HepG2 (cell line): ENCODE measurements at regions of chr6 and their contacts with region 1.

Region 1: GRCh38 chr6:49698478-49698877 is 14.9 kb downstream of the CRISP2 start:
- DNase-seq: no peak
- ATAC-seq: no peak
- H3K4me3 ChIP-seq: no peak overlapping the region
- H3K27ac ChIP-seq: no peak overlapping the region
- H3K4me1 ChIP-seq: no peaks in the 10 kb centered on the region
- H3K27me3 ChIP-seq: no peaks in the 10 kb centered on the region
- CTCF ChIP-seq: no peak
- EP300 ChIP-seq: no peak
- POLR2A ChIP-seq: no peak
- RAD21 ChIP-seq: no peak

Region 2: DNA sequence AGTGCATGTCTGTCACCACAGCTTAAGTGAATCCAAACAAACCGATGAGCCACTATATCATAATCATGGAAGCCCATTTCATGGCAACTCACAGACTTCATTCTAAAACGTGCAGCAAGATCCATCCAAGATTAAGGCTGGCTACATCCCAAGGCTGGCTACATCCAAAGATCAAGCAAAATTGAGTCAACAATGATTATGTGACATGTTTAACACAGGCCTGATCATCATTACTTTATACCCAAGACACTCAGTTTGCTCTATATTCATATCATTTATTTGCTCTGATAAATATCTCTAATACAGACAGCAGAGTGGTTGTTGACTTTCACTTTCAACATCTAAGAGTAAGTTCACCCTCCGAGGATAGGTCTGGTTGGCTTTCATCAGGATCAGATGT is 353.4 kb before region 1 on chr6:
- CTCF ChIA-PET with region 1: no interaction called
- POLR2A ChIA-PET with region 1: no interaction called
- in situ Hi-C with region 1: no loop called
- intact Hi-C with region 1: no loop called
- DNase-seq: no peak
- ATAC-seq: no peak
- H3K4me3 ChIP-seq: no peak overlapping the region
- H3K27ac ChIP-seq: no peak overlapping the region
- H3K4me1 ChIP-seq: no peaks in the 10 kb centered on the region
- H3K27me3 ChIP-seq: no peaks in the 10 kb centered on the region
- CTCF ChIP-seq: no peak
- EP300 ChIP-seq: no peak
- POLR2A ChIP-seq: no peak
- RAD21 ChIP-seq: no peak

Region 3: DNA sequence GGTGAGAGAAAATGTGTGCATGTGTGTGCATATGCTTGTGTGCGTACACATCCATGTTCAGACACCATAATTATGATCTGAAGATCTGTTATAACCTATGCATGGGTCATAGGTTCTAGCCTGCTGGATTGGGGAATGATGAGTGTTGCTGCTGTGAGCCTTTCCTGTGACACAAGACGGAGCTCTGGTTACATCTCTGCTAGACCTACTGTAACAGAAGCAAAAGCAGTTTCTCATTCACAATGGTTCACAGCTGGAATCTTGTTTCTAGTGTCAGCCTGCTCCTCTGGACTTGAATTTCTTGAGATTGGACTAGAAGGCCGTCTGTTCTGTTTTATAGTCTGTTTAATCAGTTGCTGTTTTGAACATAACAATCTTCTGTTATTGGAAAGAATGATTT is 225.3 kb after region 1 on chr6:
- CTCF ChIA-PET with region 1: no interaction called
- POLR2A ChIA-PET with region 1: no interaction called
- in situ Hi-C with region 1: no loop called
- intact Hi-C with region 1: no loop called
- DNase-seq: no peak
- ATAC-seq: peak; percentile 40; the same call in 1 of the 3 replicates
- H3K4me3 ChIP-seq: no peak overlapping the region
- H3K27ac ChIP-seq: no peak overlapping the region
- H3K4me1 ChIP-seq: no peaks in the 10 kb centered on the region
- H3K27me3 ChIP-seq: no peaks in the 10 kb centered on the region
- CTCF ChIP-seq: peak; percentile 35; the same call in 1 of the 2 replicates
- EP300 ChIP-seq: no peak
- POLR2A ChIP-seq: no peak
- RAD21 ChIP-seq: no peak

Region 4: DNA sequence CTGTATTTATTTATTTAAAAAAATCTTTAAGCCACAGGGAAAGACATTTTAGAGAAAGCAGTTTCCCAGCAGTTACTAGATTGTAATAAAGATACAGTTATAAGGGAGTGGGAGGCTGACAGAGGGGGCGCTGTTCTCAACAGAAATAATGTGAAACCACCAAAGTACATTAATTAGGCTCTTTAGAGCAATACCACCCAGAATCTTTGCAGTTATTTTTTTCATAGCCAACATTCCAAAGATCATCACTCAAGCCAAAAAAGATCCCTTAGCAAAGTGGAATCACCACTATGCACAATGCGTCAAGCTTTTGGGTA is 682.6 kb after region 1 on chr6:
- CTCF ChIA-PET with region 1: no interaction called
- POLR2A ChIA-PET with region 1: no interaction called
- in situ Hi-C with region 1: no loop called
- intact Hi-C with region 1: loop called (anchors 10 kb)
- DNase-seq: no peak
- ATAC-seq: peak; percentile 77
- H3K4me3 ChIP-seq: peak overlapping the region in 2 of 3 experiments; percentile 26 to 49; a peak in 2 of 6 replicates
- H3K27ac ChIP-seq: no peak overlapping the region
- H3K4me1 ChIP-seq: no peaks in the 10 kb centered on the region
- H3K27me3 ChIP-seq: no peaks in the 10 kb centered on the region
- CTCF ChIP-seq: 0 out of 2 replicates have a peak, but pooled peaks have one; percentile 28
- EP300 ChIP-seq: no peak
- POLR2A ChIP-seq: no peak
- RAD21 ChIP-seq: no peak